ENCODE measurements at regions of chr13 and their contacts with region 1.

Region 1: DNA sequence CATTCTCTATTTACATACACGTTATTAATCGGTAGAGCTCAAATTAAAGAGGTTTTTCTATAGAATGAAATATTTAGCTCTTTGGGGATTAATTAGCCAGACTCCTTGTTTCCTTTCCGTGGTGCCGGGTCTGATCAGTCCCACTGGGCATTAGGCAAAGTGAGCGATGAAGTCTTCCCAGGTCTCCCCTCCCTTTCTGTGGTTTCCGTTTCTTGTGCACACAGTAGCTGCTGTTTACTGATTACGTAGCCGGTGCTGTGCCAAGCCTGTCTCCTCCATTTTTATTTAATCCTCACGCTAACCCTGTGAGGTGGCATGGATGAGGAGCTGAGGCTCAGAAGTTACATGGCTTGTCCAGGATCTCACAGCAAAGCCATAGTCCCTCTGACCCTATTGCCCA is 9.0 kb downstream of the SLC25A15 start:
- DNase-seq: peak in 4 of 14 experiments; percentile 28 to 68 (median 55)
- ATAC-seq: peak; percentile 79
- H3K4me3 ChIP-seq: peak overlapping the region; percentile 13
- H3K4me3 Mint-ChIP-seq: peak overlapping the region; percentile 46
- H3K27ac ChIP-seq: no peak overlapping the region
- H3K27ac Mint-ChIP-seq: peak overlapping the region; percentile 86
- H3K4me1 ChIP-seq: peaks cover 17% of the 10 kb centered on the region
- H3K4me1 Mint-ChIP-seq: peaks cover 16% of the 10 kb centered on the region
- H3K27me3 ChIP-seq: no peaks in the 10 kb centered on the region
- H3K27me3 Mint-ChIP-seq: no peaks in the 10 kb centered on the region
- CTCF ChIP-seq: no peak

Region 2: DNA sequence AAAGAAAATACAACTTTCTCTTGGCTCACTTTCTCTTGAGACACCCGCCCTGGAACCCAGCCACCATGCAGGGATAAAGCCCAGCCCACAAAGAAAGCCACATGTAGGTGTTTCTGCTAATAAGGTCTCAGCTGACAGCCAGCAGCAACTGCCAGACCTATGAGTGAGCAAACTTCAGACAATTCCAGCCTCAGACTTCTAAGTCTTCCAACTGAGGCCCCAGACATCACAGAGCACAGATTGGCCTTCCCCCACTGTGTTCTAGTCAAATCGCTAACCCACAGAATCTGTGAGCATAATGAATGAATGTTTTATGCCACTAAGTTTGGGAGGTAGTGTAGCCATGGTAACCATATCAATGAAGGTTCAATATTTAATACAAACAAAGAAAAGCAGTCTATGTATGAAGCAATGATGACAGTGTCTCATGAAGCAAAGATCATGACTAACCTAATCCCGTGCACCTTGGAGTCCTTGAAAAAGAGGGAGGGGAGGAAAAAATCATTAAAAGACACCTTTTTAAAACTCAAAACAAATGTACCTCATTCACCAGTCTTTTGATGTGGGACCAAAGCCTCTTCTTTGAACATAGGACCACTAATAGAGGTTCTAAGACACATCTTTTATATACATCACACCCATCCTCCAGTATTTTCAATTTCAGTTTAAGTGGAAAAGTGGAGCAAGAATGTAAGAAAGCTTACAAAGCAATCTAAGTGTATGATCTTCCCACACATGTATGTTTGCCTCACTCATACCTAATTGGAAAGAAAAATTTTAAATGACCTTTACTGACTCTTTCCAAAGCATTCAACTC is 33.6 kb before region 1 on chr13:
- CTCF ChIA-PET with region 1: no interaction called
- POLR2A ChIA-PET with region 1: no interaction called
- intact Hi-C with region 1: loop called in 1 of 2 experiments (anchors 5 kb)
- DNase-seq: peak in 5 of 14 experiments; percentile 7 to 75 (median 31)
- ATAC-seq: peak; percentile 82
- H3K4me3 ChIP-seq: no peak overlapping the region
- H3K4me3 Mint-ChIP-seq: peak overlapping the region; percentile 31
- H3K27ac ChIP-seq: no peak overlapping the region
- H3K27ac Mint-ChIP-seq: peak overlapping the region; percentile 74
- H3K4me1 ChIP-seq: peaks cover 8% of the 10 kb centered on the region
- H3K4me1 Mint-ChIP-seq: peaks cover 44% of the 10 kb centered on the region
- H3K27me3 ChIP-seq: no peaks in the 10 kb centered on the region
- H3K27me3 Mint-ChIP-seq: no peaks in the 10 kb centered on the region
- CTCF ChIP-seq: no peak